Left lung (tissue), 14 donors: ENCODE measurements at regions of chr3 and their contacts with region 1.

Region 1: GRCh38 chr3:9384141-9384853 is 13.1 kb upstream of the SETD5 start:
- DNase-seq: no peak
- ATAC-seq: peak; percentile 26
- H3K4me3 ChIP-seq: no peak overlapping the region
- H3K27ac ChIP-seq: peak overlapping the region in 1 of 2 donors; percentile 53
- H3K4me1 ChIP-seq: peaks cover 0 to 22% of the 10 kb centered on the region in 2 donors
- H3K27me3 ChIP-seq: no peaks in the 10 kb centered on the region
- CTCF ChIP-seq: no peak

Region 2: DNA sequence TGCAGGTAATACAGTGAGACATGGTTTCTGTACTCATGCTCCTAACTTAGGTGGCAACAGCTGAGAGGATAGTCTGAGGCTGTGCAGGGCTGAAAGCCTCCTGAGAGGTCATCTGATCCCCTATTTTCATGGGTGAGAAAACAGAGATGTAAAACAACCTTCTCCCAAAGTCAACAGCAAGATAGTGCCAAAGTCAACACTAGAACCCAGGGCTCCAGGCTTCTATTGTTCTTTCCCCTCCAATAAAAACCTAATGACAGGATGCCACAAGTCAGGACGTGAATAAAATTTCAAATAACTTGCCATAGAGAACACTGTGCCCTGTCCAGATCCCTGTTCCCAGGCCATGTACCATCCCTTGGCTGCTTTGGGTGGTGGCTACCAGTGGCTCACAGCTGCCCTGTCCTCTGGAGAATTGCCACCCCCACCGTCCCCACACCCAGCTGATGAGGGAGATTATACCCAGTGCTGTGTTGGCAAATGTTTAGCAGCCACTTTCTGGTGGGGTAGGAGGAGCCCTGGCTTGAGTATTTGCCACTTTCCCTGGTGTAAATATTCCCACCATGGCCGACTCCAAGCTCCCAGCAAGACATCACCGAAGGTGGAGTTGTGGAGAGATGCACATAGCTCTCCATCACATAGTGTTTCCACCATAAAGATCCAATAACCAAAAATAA is 189.7 kb before region 1 on chr3:
- intact Hi-C with region 1: no loop called
- DNase-seq: no peak
- ATAC-seq: no peak
- H3K4me3 ChIP-seq: no peak overlapping the region
- H3K27ac ChIP-seq: no peak overlapping the region
- H3K4me1 ChIP-seq: no peaks in the 10 kb centered on the region
- H3K27me3 ChIP-seq: no peaks in the 10 kb centered on the region
- CTCF ChIP-seq: no peak

Region 3: DNA sequence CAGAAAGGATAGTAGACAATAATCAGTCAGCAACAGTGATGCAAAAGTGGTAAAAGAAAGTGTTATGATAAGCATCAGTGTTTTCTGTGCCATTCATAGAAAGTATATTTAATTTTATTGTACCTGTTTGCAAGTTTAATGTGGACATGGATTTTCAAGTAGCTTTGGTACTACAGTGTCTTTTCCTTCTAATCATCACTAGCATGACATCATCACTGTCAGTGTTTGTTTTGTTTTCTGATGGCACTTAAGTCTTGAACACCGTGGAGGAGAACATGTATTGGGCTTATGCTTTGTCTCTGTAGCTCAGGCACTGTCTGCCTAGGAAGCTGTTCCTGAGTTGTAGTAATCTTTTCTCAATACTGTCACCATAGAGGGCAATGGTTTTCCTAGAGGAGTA is 55.0 kb after region 1 on chr3:
- intact Hi-C with region 1: loop called in 1 of 2 experiments (anchors 10 kb)
- DNase-seq: no peak
- ATAC-seq: peak; percentile 45
- H3K4me3 ChIP-seq: no peak overlapping the region
- H3K27ac ChIP-seq: no peak overlapping the region
- H3K4me1 ChIP-seq: peaks cover 0 to 5% of the 10 kb centered on the region in 2 donors
- H3K27me3 ChIP-seq: no peaks in the 10 kb centered on the region
- CTCF ChIP-seq: no peak